H1 (cell line): ENCODE measurements at regions of chr5 and their contacts with region 1.

Region 1: GRCh38 chr5:173972925-173973615 is 15.9 kb upstream of the C5orf47 start:
- DNase-seq: peak; percentile 70 to 90
- H3K4me3 ChIP-seq: peak overlapping the region; percentile 29 to 61 (median 56)
- H3K27ac ChIP-seq: peak overlapping the region; percentile 31; the same call in 1 of the 2 replicates
- H3K4me1 ChIP-seq: peaks cover 4 to 17% (median 11%) of the 10 kb centered on the region in 4 experiments
- H3K27me3 ChIP-seq: no peaks in the 10 kb centered on the region; a peak in 1 of 7 replicates
- CTCF ChIP-seq: peak; percentile 81 to 85 (median 81)
- EP300 ChIP-seq: no peak
- POLR2A ChIP-seq: no peak
- RAD21 ChIP-seq: peak; percentile 92

Region 2: GRCh38 chr5:173615884-173616576 is 357.0 kb before region 1 on chr5:
- CTCF ChIA-PET with region 1: interaction called, 28 read pairs
- POLR2A ChIA-PET with region 1: interaction called, 5 read pairs
- DNase-seq: peak in 1 of 2 experiments; percentile 71
- H3K4me3 ChIP-seq: peak overlapping the region; percentile 82 to 95 (median 86)
- H3K27ac ChIP-seq: peak overlapping the region; percentile 76
- H3K4me1 ChIP-seq: peaks cover 2 to 14% (median 11%) of the 10 kb centered on the region in 4 experiments; a peak in 4 of 7 replicates
- H3K27me3 ChIP-seq: no peaks in the 10 kb centered on the region
- CTCF ChIP-seq: peak; percentile 56 to 63 (median 60)
- EP300 ChIP-seq: no peak
- POLR2A ChIP-seq: peak; percentile 66 to 74
- RAD21 ChIP-seq: peak in 1 of 2 experiments; percentile 32; a peak in 2 of 4 replicates

Region 3: DNA sequence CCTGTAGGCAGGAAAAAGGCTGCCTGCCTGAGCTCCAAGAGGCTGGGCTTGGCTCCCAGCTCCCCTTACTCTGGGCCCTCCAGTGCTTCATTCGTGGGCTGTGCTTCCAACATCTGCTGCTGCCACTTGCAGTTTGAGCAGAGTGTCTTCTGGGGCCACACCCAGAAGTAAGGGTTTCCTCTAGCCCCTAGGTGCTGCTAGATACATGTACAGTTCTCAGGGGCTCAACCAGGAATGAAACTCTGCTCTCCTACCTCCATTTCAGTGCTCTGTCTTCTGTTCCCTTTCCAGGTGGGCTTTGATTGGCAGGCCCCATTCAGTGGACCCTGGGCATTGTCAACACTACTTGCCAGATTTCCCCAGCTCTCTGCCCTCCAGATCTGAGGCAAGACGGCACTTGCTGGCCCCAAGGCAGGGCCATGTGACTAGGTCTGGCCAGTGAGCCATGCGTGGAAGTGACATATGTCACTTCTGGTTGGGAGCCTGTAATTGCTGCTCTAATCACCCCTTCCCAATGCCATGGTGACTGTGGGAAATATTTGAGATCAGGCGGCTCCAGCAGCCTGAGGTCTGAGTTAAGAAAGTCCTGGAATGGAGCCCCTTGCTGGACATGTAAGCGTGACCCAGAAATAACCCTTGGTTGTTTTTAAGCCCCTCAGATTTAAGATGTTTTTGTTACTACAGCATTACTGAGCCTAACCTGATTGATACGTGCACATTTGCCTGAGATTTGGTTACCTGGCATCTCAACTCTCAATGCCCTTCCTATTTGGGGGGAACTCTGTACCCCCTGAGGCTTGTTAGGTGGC is 347.2 kb before region 1 on chr5:
- CTCF ChIA-PET with region 1: interaction called, 24 read pairs
- POLR2A ChIA-PET with region 1: interaction called, 5 read pairs
- DNase-seq: no peak
- H3K4me3 ChIP-seq: no peak overlapping the region
- H3K27ac ChIP-seq: no peak overlapping the region
- H3K4me1 ChIP-seq: peaks cover 12 to 18% (median 16%) of the 10 kb centered on the region in 4 experiments
- H3K27me3 ChIP-seq: no peaks in the 10 kb centered on the region
- CTCF ChIP-seq: no peak
- EP300 ChIP-seq: no peak
- POLR2A ChIP-seq: no peak
- RAD21 ChIP-seq: 0 out of 4 replicates have a peak, but pooled peaks have one; percentile 3

Region 4: GRCh38 chr5:173733021-173733420 is 240.0 kb before region 1 on chr5:
- CTCF ChIA-PET with region 1: interaction called, 11 read pairs
- POLR2A ChIA-PET with region 1: no interaction called
- DNase-seq: no peak
- H3K4me3 ChIP-seq: no peak overlapping the region
- H3K27ac ChIP-seq: no peak overlapping the region
- H3K4me1 ChIP-seq: peaks cover 0 to 6% (median 4%) of the 10 kb centered on the region in 4 experiments; a peak in 4 of 7 replicates
- H3K27me3 ChIP-seq: no peaks in the 10 kb centered on the region; a peak in 1 of 7 replicates
- CTCF ChIP-seq: no peak
- EP300 ChIP-seq: no peak
- POLR2A ChIP-seq: no peak
- RAD21 ChIP-seq: no peak

Region 5: GRCh38 chr5:173786266-173787187 is 186.5 kb before region 1 on chr5:
- CTCF ChIA-PET with region 1: interaction called, 12 read pairs
- POLR2A ChIA-PET with region 1: no interaction called
- DNase-seq: no peak
- H3K4me3 ChIP-seq: no peak overlapping the region
- H3K27ac ChIP-seq: no peak overlapping the region
- H3K4me1 ChIP-seq: peaks cover 0 to 6% (median 0%) of the 10 kb centered on the region in 4 experiments; a peak in 3 of 7 replicates
- H3K27me3 ChIP-seq: peaks cover 0 to 2% (median 0%) of the 10 kb centered on the region in 4 experiments; a peak in 1 of 7 replicates
- CTCF ChIP-seq: peak; percentile 25 to 68 (median 64); a peak in 3 of 4 replicates
- EP300 ChIP-seq: no peak
- POLR2A ChIP-seq: no peak
- RAD21 ChIP-seq: peak; percentile 41 to 55

Region 6: DNA sequence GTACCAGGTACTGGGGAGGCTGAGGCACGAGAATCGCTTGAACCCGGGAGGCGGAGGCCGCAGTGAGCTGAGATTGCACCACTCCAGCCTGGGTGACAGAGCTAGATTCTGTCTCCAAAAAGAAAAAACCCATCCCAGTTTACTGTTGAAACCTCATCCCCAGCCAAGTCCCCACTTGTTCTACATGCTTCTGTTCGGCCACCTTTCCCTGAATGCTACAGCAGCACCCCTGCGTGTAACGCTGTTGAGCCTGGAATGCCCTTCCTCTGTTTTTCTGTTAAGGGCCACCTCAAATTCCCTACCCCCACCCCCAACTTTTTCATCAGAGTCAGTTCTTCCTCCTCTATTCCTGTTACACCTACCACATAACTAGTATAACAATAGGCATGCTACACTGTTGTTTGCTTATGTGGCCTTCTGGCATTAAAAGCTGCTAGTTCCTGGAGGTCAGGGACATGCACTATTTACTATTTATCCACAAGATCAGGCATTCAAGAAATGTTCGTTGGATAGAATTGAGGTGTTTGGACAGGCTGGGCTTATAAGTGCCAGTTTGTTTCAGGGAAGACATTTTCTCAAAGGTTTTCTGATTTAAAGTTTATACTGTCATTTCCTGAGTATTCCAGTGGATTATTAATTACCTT is 31.2 kb before region 1 on chr5:
- CTCF ChIA-PET with region 1: interaction called, 10 read pairs
- POLR2A ChIA-PET with region 1: interaction called, 3 read pairs
- DNase-seq: peak in 1 of 2 experiments; percentile 33
- H3K4me3 ChIP-seq: peak overlapping the region in 1 of 4 experiments; percentile 37; a peak in 1 of 8 replicates
- H3K27ac ChIP-seq: peak overlapping the region; percentile 61; the same call in 1 of the 2 replicates
- H3K4me1 ChIP-seq: peaks cover 0 to 11% (median 7%) of the 10 kb centered on the region in 4 experiments; a peak in 4 of 7 replicates
- H3K27me3 ChIP-seq: no peaks in the 10 kb centered on the region
- CTCF ChIP-seq: no peak
- EP300 ChIP-seq: no peak
- POLR2A ChIP-seq: peak in 1 of 2 experiments; percentile 53; a peak in 1 of 3 replicates
- RAD21 ChIP-seq: no peak

Region 7: DNA sequence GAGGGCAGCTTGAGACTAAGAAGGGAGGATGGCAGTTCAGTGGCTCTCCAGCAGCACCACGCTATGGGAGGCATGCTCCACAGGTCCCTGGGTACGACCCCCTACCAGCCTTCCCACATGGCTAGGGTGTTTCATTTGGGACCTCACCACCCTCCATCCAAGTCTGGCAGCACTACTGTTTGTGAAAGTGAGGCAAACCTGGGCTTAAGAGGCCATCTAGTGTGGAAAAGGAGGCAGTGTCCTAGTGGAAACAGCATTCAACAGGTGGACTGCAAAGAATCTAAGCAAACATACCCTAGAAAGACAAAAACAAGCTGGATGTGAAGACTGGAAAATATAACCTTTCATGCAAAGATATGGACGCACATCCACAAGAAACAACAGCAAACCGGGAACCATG is 11.1 kb after region 1 on chr5:
- CTCF ChIA-PET with region 1: interaction called, 35 read pairs
- POLR2A ChIA-PET with region 1: interaction called, 4 read pairs
- DNase-seq: peak in 1 of 2 experiments; percentile 50
- H3K4me3 ChIP-seq: no peak overlapping the region
- H3K27ac ChIP-seq: no peak overlapping the region
- H3K4me1 ChIP-seq: peaks cover 4 to 8% (median 5%) of the 10 kb centered on the region in 4 experiments; a peak in 4 of 7 replicates
- H3K27me3 ChIP-seq: no peaks in the 10 kb centered on the region
- CTCF ChIP-seq: peak; percentile 8 to 87 (median 80)
- EP300 ChIP-seq: no peak
- POLR2A ChIP-seq: no peak
- RAD21 ChIP-seq: peak; percentile 96